GM12878 (cell line): ENCODE measurements at regions of chr4 and their contacts with region 1.

Region 1: DNA sequence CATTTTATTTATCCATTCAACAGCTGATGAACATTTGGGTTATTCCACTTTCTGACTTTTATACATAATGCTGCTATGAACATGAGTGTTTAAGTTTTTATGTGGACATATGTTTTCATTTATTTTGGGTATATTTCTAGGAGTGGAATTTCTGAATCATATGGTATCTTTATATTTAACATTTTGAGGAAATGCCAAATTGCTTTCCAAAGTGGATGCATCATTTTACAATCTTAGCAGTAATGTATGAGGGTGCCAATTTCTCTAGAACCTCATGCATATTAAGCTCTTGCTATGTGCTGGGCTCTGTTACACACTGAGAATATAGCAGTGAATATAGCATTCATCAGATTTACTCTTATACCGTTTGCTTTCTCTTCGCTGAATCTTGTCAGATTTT is 983.7 kb downstream of the STIM2 start:
- DNase-seq: no peak
- ATAC-seq: no peak
- H3K4me3 ChIP-seq: no peak overlapping the region
- H3K27ac ChIP-seq: no peak overlapping the region
- H3K4me1 ChIP-seq: no peaks in the 10 kb centered on the region
- H3K27me3 ChIP-seq: no peaks in the 10 kb centered on the region
- CTCF ChIP-seq: no peak
- EP300 ChIP-seq: no peak
- POLR2A ChIP-seq: no peak
- RAD21 ChIP-seq: no peak

Region 2: DNA sequence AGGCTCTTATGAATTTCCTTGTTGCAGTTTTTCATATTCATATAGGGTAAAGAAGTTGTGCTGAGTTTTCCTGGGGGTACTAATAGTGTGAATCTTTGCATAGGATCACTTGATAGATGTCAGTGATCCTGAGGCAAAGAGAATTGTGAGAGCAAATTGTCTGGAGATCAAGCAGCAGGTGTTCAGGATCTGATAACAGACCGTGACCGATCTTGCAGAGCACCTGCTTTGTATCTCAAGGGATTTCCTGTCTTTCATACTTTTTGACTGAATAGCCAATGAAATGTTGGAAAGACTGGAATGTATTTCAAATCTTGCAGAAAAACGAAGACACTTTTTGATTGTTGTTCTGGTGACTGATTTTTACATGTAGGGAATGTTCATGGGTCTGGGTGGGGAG is 69.2 kb before region 1 on chr4:
- CTCF ChIA-PET with region 1: no interaction called
- POLR2A ChIA-PET with region 1: no interaction called
- RAD21 ChIA-PET with region 1: no interaction called
- SMC1A ChIA-PET with region 1: no interaction called
- in situ Hi-C with region 1: no loop called
- intact Hi-C with region 1: no loop called
- DNase-seq: no peak
- ATAC-seq: no peak
- H3K4me3 ChIP-seq: no peak overlapping the region
- H3K27ac ChIP-seq: no peak overlapping the region
- H3K4me1 ChIP-seq: no peaks in the 10 kb centered on the region
- H3K27me3 ChIP-seq: no peaks in the 10 kb centered on the region
- CTCF ChIP-seq: no peak
- EP300 ChIP-seq: no peak
- POLR2A ChIP-seq: no peak
- RAD21 ChIP-seq: no peak

Region 3: DNA sequence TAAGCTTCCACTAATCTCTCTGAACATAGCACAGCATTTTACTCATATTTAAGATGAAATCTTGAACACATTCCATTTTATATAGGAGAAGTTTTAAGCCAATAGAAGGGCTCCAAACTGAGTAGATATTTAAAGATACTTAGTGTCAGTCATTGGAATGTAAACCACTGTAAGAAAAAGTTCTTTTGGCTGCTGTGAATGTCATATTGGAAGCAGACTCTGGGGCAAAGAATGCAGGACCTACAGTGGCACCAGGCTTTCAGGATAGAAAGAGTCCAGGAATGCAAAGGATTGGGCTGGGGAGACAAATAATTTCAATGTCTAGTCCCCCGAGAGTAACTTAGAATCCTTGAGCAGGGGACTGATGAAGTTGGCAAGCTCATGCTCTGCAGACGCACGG is 64.0 kb after region 1 on chr4:
- CTCF ChIA-PET with region 1: no interaction called
- POLR2A ChIA-PET with region 1: no interaction called
- RAD21 ChIA-PET with region 1: no interaction called
- SMC1A ChIA-PET with region 1: no interaction called
- in situ Hi-C with region 1: loop called (anchors 10 kb)
- intact Hi-C with region 1: no loop called
- DNase-seq: no peak
- ATAC-seq: no peak
- H3K4me3 ChIP-seq: no peak overlapping the region
- H3K27ac ChIP-seq: no peak overlapping the region
- H3K4me1 ChIP-seq: no peaks in the 10 kb centered on the region
- H3K27me3 ChIP-seq: no peaks in the 10 kb centered on the region
- CTCF ChIP-seq: no peak
- EP300 ChIP-seq: no peak
- POLR2A ChIP-seq: no peak
- RAD21 ChIP-seq: no peak